Naive thymus-derived CD4-positive, alpha-beta T cell (primary cell): ENCODE measurements at regions of chr9 and their contacts with region 1.

Region 1: DNA sequence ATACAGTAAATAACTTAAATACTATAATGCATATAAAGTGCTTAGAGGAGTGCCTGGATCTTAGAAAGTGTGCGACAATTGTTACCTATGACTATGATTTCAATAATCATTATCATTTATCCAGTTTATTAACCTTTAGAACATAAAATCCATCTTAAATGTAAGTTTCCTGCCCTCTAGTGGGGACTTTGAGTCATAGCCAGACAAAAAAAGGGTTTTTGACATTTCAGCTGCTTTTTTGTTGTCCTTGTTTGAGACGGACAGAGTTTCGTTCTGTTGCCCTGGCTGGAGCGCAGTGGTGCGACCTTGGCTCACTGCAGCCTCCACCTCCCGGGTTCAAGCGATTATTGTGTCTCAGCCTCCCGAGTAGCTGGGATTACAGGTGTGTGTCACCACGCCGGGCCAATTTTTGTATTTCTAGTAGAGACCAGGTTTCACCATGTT is 9.7 kb upstream of the C9orf152 start:
- DNase-seq: peak in 4 of 9 donors; percentile 17 to 39 (median 25)
- ATAC-seq: no peak
- H3K4me3 ChIP-seq: no peak overlapping the region
- H3K4me3 Mint-ChIP-seq: no peak overlapping the region
- H3K27ac ChIP-seq: no peak overlapping the region
- H3K27ac Mint-ChIP-seq: no peak overlapping the region
- H3K4me1 ChIP-seq: no peaks in the 10 kb centered on the region
- H3K4me1 Mint-ChIP-seq: peaks cover 0 to 9% (median 0%) of the 10 kb centered on the region in 7 donors
- H3K27me3 ChIP-seq: no peaks in the 10 kb centered on the region
- H3K27me3 Mint-ChIP-seq: peaks cover 0 to 51% (median 5%) of the 10 kb centered on the region in 5 donors

Region 2: GRCh38 chr9:109574068-109574882 is 643.4 kb before region 1 on chr9:
- CTCF ChIA-PET with region 1: interaction called, 4 read pairs
- POLR2A ChIA-PET with region 1: no interaction called
- intact Hi-C with region 1: loop called in 1 of 2 experiments (anchors 1 kb)
- DNase-seq: peak in 4 of 9 donors; percentile 2 to 16 (median 4)
- ATAC-seq: no peak
- H3K4me3 ChIP-seq: no peak overlapping the region
- H3K4me3 Mint-ChIP-seq: no peak overlapping the region
- H3K27ac ChIP-seq: no peak overlapping the region
- H3K27ac Mint-ChIP-seq: no peak overlapping the region
- H3K4me1 ChIP-seq: no peaks in the 10 kb centered on the region
- H3K4me1 Mint-ChIP-seq: no peaks in the 10 kb centered on the region
- H3K27me3 ChIP-seq: no peaks in the 10 kb centered on the region
- H3K27me3 Mint-ChIP-seq: peaks cover under 1 to 30% (median 15%) of the 10 kb centered on the region in 5 donors

Region 3: GRCh38 chr9:109880277-109881169 is 337.2 kb before region 1 on chr9:
- CTCF ChIA-PET with region 1: interaction called, 6 read pairs
- POLR2A ChIA-PET with region 1: no interaction called
- intact Hi-C with region 1: loop called in 1 of 2 experiments (anchors 1 kb)
- DNase-seq: peak in 5 of 9 donors; percentile 2 to 33 (median 25)
- ATAC-seq: peak; percentile 72
- H3K4me3 ChIP-seq: no peak overlapping the region
- H3K4me3 Mint-ChIP-seq: peak overlapping the region in 1 of 10 donors; percentile 62
- H3K27ac ChIP-seq: no peak overlapping the region
- H3K27ac Mint-ChIP-seq: peak overlapping the region in 1 of 9 donors; percentile 31
- H3K4me1 ChIP-seq: no peaks in the 10 kb centered on the region
- H3K4me1 Mint-ChIP-seq: peaks cover 0 to 37% (median 0%) of the 10 kb centered on the region in 7 donors
- H3K27me3 ChIP-seq: no peaks in the 10 kb centered on the region
- H3K27me3 Mint-ChIP-seq: peaks cover 4 to 15% (median 8%) of the 10 kb centered on the region in 5 donors

Region 4: DNA sequence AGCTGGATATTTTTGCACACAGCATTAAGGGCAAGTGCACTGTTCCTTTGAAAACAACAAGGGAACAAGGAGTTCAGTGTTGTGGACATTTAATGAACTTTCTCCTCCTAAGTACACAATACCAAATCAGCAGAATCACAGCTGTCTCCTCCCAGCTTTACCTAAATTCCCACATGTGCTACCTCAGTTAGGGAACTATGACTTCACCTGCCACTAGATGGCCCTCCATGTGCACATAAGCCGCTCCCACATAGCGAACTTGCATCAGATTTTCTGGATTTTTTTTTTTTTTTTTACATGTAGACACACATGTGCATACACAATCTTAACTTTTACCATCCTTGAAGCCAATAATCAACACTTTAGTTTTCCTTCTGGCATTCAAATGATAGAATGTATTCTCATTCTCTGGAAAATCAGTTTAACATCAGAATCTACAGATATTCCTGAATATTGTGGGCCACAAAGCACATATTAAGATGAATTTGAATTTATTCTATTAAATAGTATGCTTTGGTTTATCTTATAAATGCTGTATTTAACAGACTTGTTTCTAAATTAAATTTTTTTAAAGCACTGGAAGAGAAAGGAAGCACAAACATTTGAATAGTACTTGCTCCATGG is 314.1 kb before region 1 on chr9:
- CTCF ChIA-PET with region 1: interaction called, 6 read pairs
- POLR2A ChIA-PET with region 1: no interaction called
- intact Hi-C with region 1: loop called (anchors 1 kb)
- DNase-seq: peak; percentile 11 to 73 (median 53)
- ATAC-seq: peak; percentile 84
- H3K4me3 ChIP-seq: no peak overlapping the region
- H3K4me3 Mint-ChIP-seq: no peak overlapping the region
- H3K27ac ChIP-seq: no peak overlapping the region
- H3K27ac Mint-ChIP-seq: no peak overlapping the region
- H3K4me1 ChIP-seq: no peaks in the 10 kb centered on the region
- H3K4me1 Mint-ChIP-seq: peaks cover 0 to 37% (median 5%) of the 10 kb centered on the region in 7 donors
- H3K27me3 ChIP-seq: no peaks in the 10 kb centered on the region
- H3K27me3 Mint-ChIP-seq: no peaks in the 10 kb centered on the region

Region 5: DNA sequence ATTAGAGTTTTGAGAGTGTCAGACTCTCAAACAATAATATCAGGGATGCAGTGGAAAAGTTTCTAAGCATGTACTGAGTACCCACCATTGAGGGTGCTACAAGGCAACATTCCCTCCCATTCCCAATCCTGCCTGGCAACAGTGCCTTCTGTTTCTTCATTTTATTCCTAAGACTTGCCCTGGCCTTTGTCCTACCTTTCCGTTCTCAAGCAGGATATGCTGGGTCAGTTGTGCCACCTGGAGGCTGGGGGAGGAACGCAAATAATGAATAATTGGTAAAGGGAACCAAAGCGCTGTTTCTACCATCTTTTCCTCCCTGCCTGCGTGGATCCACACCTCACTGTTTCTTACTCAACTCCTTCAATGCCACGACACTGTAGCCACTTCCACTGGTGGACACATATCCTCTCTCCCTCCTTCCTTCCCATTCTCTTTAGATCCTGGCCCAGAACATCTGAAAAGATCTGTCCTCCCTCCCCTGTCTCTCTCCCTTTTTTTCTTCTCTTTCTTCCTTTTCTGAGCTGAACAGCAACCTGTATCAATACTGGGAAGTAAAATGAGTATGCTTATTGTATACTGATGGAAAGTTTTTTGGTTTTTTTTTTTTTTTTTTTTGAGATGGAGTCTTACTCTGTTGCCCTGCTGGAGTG is 159.2 kb before region 1 on chr9:
- CTCF ChIA-PET with region 1: no interaction called
- POLR2A ChIA-PET with region 1: no interaction called
- intact Hi-C with region 1: loop called in 1 of 2 experiments (anchors 10 kb)
- DNase-seq: peak; percentile 16 to 63 (median 47)
- ATAC-seq: peak; percentile 68
- H3K4me3 ChIP-seq: no peak overlapping the region
- H3K4me3 Mint-ChIP-seq: peak overlapping the region in 2 of 10 donors; percentile 9 to 18
- H3K27ac ChIP-seq: no peak overlapping the region
- H3K27ac Mint-ChIP-seq: peak overlapping the region in 1 of 9 donors; percentile 66
- H3K4me1 ChIP-seq: no peaks in the 10 kb centered on the region
- H3K4me1 Mint-ChIP-seq: peaks cover 0 to 54% (median 8%) of the 10 kb centered on the region in 7 donors
- H3K27me3 ChIP-seq: no peaks in the 10 kb centered on the region
- H3K27me3 Mint-ChIP-seq: peaks cover 0 to 4% (median 0%) of the 10 kb centered on the region in 5 donors

Region 6: DNA sequence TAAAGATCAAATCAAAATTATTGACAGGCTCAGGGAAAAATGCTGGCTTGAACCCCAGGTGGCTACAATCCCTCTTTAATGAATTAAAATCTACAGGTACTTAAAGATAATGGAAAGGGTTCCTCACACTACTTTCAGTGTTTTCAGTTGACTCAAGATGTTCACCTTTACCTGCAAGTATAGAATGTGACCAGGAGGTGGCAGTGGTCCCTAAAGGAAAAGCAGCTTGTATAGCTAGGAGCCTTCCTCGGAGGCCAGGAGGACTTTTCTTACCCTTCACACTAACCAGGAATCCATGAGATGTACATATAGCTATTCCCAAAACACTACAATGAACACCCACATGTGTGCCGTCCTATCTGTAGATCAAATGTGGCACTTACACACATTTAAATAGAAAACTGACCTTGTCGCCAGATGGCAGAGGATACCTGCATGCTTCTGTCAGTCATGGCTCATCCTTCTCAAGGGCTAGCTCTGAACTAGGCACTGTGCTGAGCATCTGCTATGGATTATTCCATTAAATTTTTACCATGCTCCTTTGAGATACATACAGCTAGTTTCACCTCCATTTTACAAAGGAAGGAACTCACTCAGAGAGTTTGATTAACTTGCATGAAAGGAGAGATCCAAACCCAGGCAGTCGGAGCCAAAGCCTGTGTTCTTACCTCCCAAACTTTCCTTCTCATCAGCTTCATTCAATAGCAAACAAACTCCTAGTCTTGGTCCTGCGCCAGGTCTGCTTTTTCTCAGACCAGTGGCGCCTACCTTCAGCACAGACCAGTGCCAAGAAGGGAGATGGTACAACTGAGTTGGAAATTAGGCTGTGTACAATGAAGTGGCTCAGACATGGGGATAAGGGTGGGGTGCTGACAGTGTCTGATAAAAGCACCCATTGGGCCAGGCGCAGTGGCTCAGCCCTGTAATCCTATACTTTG is 34.2 kb before region 1 on chr9:
- CTCF ChIA-PET with region 1: interaction called, 4 read pairs
- POLR2A ChIA-PET with region 1: no interaction called
- intact Hi-C with region 1: loop called (anchors 1 kb)
- DNase-seq: peak in 8 of 9 donors; percentile 10 to 58 (median 40)
- ATAC-seq: peak; percentile 71
- H3K4me3 ChIP-seq: no peak overlapping the region
- H3K4me3 Mint-ChIP-seq: no peak overlapping the region
- H3K27ac ChIP-seq: no peak overlapping the region
- H3K27ac Mint-ChIP-seq: no peak overlapping the region
- H3K4me1 ChIP-seq: no peaks in the 10 kb centered on the region
- H3K4me1 Mint-ChIP-seq: peaks cover 0 to 16% (median 0%) of the 10 kb centered on the region in 7 donors
- H3K27me3 ChIP-seq: no peaks in the 10 kb centered on the region
- H3K27me3 Mint-ChIP-seq: peaks cover 0 to 2% (median 0%) of the 10 kb centered on the region in 5 donors